B cell (primary cell): ENCODE measurements at regions of chr11 and their contacts with region 1.

Region 1: DNA sequence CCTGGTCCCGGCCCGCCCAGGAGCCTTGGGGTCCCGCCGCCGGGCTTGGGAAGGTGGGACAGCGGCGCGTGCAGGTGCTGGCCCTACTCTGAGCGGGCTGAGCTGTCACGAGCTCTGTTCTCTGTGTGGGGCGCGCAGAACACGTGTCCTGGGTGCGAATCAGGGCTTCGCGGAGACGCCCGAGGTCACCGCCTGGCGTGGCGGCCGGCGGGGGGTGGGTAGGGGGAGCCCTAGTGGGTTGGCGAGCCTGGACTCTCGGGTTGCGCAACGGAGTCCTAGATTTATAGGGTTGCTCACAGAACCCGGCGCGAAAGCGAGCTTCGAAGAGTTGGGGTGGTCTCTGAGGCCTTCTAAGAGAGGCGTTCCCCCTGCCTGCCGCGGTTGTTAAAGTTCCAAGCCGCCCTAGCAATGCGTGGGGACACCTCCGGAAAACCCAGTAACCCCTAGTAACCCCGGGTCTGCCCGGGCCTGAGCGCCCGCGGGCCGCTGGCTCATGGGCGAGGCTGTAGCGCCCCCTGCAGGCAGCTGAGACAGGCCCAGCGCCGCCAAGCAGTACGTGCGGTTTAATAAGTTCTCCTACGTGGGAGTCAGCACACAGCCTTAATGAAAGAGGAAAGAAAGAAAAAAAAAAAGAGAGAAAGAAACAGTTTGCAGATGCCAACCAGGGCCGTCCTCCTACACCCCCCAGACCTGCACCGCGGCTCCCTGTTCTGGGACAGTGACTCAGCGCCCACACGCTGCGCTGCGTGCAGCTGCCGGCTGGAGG is 2.8 kb downstream of the ADM start:
- DNase-seq: peak; percentile 91
- ATAC-seq: peak; percentile 72
- H3K4me3 ChIP-seq: peak overlapping the region; percentile 26 to 92 (median 55)
- H3K4me3 Mint-ChIP-seq: peak overlapping the region; percentile 98
- H3K27ac ChIP-seq: no peak overlapping the region
- H3K27ac Mint-ChIP-seq: peak overlapping the region; percentile 85
- H3K4me1 ChIP-seq: peaks cover 42 to 55% of the 10 kb centered on the region in 2 donors
- H3K4me1 Mint-ChIP-seq: peaks cover 50% of the 10 kb centered on the region
- H3K27me3 ChIP-seq: peaks cover 0 to 34% (median 12%) of the 10 kb centered on the region in 4 experiments
- H3K27me3 Mint-ChIP-seq: peaks cover 20% of the 10 kb centered on the region
- CTCF ChIP-seq: peak; percentile 98

Region 2: GRCh38 chr11:8682303-8683114 is 1625.1 kb before region 1 on chr11 and contains the starts of genes RPL27A and TRIM66:
- CTCF ChIA-PET with region 1: no interaction called
- POLR2A ChIA-PET with region 1: no interaction called
- intact Hi-C with region 1: loop called (anchors 5 kb)
- DNase-seq: peak; percentile 98
- ATAC-seq: peak; percentile 93
- H3K4me3 ChIP-seq: peak within 1 kb of the TSS; percentile 82 to 99 (median 88)
- H3K4me3 Mint-ChIP-seq: peak within 1 kb of the TSS; percentile 94
- H3K27ac ChIP-seq: peak within 1 kb of the TSS; percentile 87 to 98
- H3K27ac Mint-ChIP-seq: peak within 1 kb of the TSS; percentile 97
- H3K4me1 ChIP-seq: peaks cover 25 to 26% of the 10 kb centered on the region in 2 donors
- H3K4me1 Mint-ChIP-seq: peaks cover 41% of the 10 kb centered on the region
- H3K27me3 ChIP-seq: no peaks in the 10 kb centered on the region
- H3K27me3 Mint-ChIP-seq: no peaks in the 10 kb centered on the region
- CTCF ChIP-seq: peak; percentile 18
- total RNA-seq, gene RPL27A: 1,369 and 1,473 TPM in 2 replicates
- total RNA-seq, gene TRIM66: 21.1 and 21.4 TPM in 2 replicates

Region 3: DNA sequence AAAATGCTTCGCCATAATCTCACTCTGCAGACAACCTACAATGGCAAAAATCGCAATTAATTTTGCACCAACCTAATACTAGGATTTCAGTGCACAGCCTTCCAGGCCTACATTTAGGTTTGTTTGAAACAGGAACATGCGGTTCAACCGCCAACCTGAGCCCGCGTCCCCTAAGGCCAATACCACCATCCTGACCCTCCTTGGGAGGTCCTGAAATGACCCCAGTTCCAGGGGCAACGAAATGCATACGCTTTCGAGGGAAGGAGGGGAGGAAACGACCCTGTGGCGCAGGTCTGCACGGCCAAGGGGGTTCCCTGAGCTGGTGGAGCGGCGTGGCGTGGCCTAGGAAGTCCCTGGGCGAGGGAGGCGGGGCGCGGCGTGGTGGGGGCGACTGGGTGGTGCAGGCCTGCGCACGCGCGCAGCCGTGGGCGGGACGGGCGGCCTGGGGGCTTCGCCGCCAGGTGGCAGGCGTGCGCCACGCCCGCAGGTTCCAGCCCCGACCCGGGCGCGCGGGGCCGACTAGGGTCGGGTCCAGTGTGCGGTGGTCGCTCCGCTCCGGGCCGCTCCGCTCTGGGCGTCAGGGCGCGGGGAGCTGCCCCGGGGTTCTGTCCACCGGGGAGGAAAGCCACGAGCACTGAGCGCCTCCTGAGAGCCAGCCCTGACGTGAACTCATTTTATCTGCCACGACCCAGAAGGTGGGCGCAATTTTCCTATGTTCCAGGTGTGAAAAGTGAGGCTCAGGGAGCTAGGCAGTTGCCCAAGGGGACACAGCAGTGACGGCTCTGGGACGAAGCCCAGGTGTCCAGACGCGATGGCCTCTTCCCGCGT is 549.6 kb before region 1 on chr11:
- CTCF ChIA-PET with region 1: interaction called, 36 read pairs
- POLR2A ChIA-PET with region 1: interaction called, 8 read pairs
- intact Hi-C with region 1: loop called (anchors 1 kb)
- DNase-seq: peak; percentile 96
- ATAC-seq: peak; percentile 59
- H3K4me3 ChIP-seq: peak overlapping the region; percentile 76 to 94 (median 79)
- H3K4me3 Mint-ChIP-seq: peak overlapping the region; percentile 91
- H3K27ac ChIP-seq: peak overlapping the region; percentile 88 to 89
- H3K27ac Mint-ChIP-seq: peak overlapping the region; percentile 97
- H3K4me1 ChIP-seq: peaks cover 55 to 60% of the 10 kb centered on the region in 2 donors
- H3K4me1 Mint-ChIP-seq: peaks cover 79% of the 10 kb centered on the region
- H3K27me3 ChIP-seq: no peaks in the 10 kb centered on the region
- H3K27me3 Mint-ChIP-seq: no peaks in the 10 kb centered on the region
- CTCF ChIP-seq: peak; percentile 85

Region 4: GRCh38 chr11:9982800-9983579 is 324.6 kb before region 1 on chr11:
- CTCF ChIA-PET with region 1: interaction called, 3 read pairs
- POLR2A ChIA-PET with region 1: no interaction called
- intact Hi-C with region 1: loop called (anchors 5 kb)
- DNase-seq: no peak
- ATAC-seq: no peak
- H3K4me3 ChIP-seq: no peak overlapping the region
- H3K4me3 Mint-ChIP-seq: no peak overlapping the region
- H3K27ac ChIP-seq: no peak overlapping the region
- H3K27ac Mint-ChIP-seq: no peak overlapping the region
- H3K4me1 ChIP-seq: peaks cover 8 to 20% of the 10 kb centered on the region in 2 donors
- H3K4me1 Mint-ChIP-seq: peaks cover 29% of the 10 kb centered on the region
- H3K27me3 ChIP-seq: no peaks in the 10 kb centered on the region
- H3K27me3 Mint-ChIP-seq: no peaks in the 10 kb centered on the region
- CTCF ChIP-seq: no peak

Region 5: GRCh38 chr11:10293423-10294289 is 14.0 kb before region 1 on chr11 and contains the start of gene SBF2:
- CTCF ChIA-PET with region 1: interaction called, 14 read pairs
- POLR2A ChIA-PET with region 1: interaction called, 8 read pairs
- intact Hi-C with region 1: loop called (anchors 1 kb)
- DNase-seq: peak; percentile 89
- ATAC-seq: peak; percentile 73
- H3K4me3 ChIP-seq: peak within 1 kb of the TSS; percentile 49 to 92 (median 70)
- H3K4me3 Mint-ChIP-seq: peak within 1 kb of the TSS; percentile 87
- H3K27ac ChIP-seq: peak within 1 kb of the TSS in 1 of 2 donors; percentile 46
- H3K27ac Mint-ChIP-seq: peak within 1 kb of the TSS; percentile 42
- H3K4me1 ChIP-seq: peaks cover 19 to 20% of the 10 kb centered on the region in 2 donors
- H3K4me1 Mint-ChIP-seq: peaks cover 24% of the 10 kb centered on the region
- H3K27me3 ChIP-seq: peaks cover 0 to 25% (median 13%) of the 10 kb centered on the region in 4 experiments
- H3K27me3 Mint-ChIP-seq: peaks cover 40% of the 10 kb centered on the region
- CTCF ChIP-seq: no peak
- total RNA-seq, gene SBF2: 17.7 and 20.6 TPM in 2 replicates

Region 6: DNA sequence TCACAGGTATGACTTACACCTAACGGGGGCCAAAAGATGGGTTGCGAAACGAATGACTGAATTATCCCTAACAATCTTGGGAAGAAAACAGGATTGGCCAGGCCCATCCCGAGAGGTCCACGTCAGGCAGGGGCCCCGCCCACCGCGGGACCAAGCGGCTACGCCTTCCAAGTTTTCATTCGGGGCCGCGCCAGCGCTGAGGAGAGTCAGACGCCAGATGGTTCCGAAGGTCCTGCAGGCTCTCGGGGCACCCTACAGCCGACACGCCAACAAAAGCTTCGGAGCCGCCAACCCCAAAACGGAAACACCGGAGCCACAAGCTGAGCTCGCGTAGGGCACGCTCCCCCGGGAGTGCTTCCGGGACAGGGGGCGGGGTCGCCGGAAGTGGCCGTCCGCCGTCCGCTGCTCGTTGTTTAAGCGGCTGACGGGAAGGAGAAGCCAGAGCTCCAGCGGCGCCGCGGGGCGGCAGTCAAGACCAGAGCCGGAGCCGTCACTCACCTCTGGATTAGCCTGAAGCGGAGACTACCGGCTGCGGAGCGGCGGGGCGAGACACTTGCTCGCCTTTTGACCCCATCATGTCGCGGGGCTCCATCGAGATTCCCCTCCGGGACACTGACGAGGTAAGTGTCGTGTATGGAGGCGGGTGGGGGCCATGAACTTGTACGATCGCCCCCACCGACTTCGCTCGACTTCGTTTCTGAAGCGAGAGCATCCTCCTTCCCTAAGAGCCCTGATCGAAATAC is 443.4 kb after region 1 on chr11 and contains the start of gene CTR9:
- CTCF ChIA-PET with region 1: no interaction called
- POLR2A ChIA-PET with region 1: no interaction called
- intact Hi-C with region 1: loop called (anchors 5 kb)
- DNase-seq: peak; percentile 95
- ATAC-seq: peak; percentile 92
- H3K4me3 ChIP-seq: peak within 1 kb of the TSS; percentile 77 to 96 (median 92)
- H3K4me3 Mint-ChIP-seq: peak within 1 kb of the TSS; percentile 95
- H3K27ac ChIP-seq: peak within 1 kb of the TSS; percentile 78 to 85
- H3K27ac Mint-ChIP-seq: peak within 1 kb of the TSS; percentile 91
- H3K4me1 ChIP-seq: peaks cover 8 to 12% of the 10 kb centered on the region in 2 donors
- H3K4me1 Mint-ChIP-seq: peaks cover 21% of the 10 kb centered on the region
- H3K27me3 ChIP-seq: no peaks in the 10 kb centered on the region
- H3K27me3 Mint-ChIP-seq: no peaks in the 10 kb centered on the region
- CTCF ChIP-seq: no peak
- total RNA-seq, gene CTR9: 46.7 and 52.0 TPM in 2 replicates